WTC11 (cell line): ENCODE measurements at regions of chr1 and their contacts with region 1.

Region 1: GRCh38 chr1:201709564-201710295 is 119.2 kb upstream of the IPO9 start:
- DNase-seq: peak; percentile 87
- ATAC-seq: peak; percentile 98
- H3K4me3 Mint-ChIP-seq: no peak overlapping the region
- H3K27ac Mint-ChIP-seq: no peak overlapping the region
- H3K4me1 Mint-ChIP-seq: peaks cover 8% of the 10 kb centered on the region
- H3K27me3 Mint-ChIP-seq: no peaks in the 10 kb centered on the region
- CTCF ChIP-seq: peak; percentile 88

Region 2: DNA sequence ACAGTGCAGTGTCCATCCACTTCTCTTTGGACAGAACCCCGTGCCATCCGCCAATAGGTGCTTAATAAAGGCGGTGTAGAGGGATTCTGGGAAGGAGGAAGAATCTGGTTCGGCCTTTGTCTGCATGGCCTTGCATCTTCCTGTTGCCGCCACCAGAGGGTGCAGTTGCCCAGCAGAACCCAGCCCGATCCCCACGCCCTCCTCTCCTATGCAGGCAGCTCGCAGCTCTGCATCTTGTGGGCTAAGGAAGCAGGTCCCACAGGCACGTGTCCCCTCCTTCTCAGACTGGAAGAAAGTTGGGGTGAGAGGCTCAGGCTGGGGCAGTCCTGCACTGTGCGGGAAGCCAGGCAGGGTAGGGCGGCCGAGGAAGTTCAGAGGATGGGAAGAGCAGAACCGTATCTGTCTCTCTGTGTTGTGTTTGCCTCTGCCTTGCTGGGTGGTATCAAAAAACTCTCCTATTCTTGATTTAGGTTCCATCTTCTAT is 150.0 kb before region 1 on chr1:
- CTCF ChIA-PET with region 1: interaction called, 155 read pairs
- POLR2A ChIA-PET with region 1: no interaction called
- DNase-seq: peak; percentile 86
- ATAC-seq: peak; percentile 96
- H3K4me3 Mint-ChIP-seq: no peak overlapping the region
- H3K27ac Mint-ChIP-seq: no peak overlapping the region
- H3K4me1 Mint-ChIP-seq: peaks cover 17% of the 10 kb centered on the region
- H3K27me3 Mint-ChIP-seq: peaks cover 9% of the 10 kb centered on the region
- CTCF ChIP-seq: peak; percentile 91

Region 3: GRCh38 chr1:201649761-201650622 is 59.7 kb before region 1 on chr1:
- CTCF ChIA-PET with region 1: interaction called, 23 read pairs
- POLR2A ChIA-PET with region 1: no interaction called
- DNase-seq: peak; percentile 92
- ATAC-seq: peak; percentile 46
- H3K4me3 Mint-ChIP-seq: peak overlapping the region; percentile 79
- H3K27ac Mint-ChIP-seq: peak overlapping the region; percentile 82; the same call in 1 of the 2 replicates
- H3K4me1 Mint-ChIP-seq: peaks cover 55% of the 10 kb centered on the region
- H3K27me3 Mint-ChIP-seq: peaks cover 17% of the 10 kb centered on the region
- CTCF ChIP-seq: no peak

Region 4: GRCh38 chr1:201676197-201676596 is 33.5 kb before region 1 on chr1:
- CTCF ChIA-PET with region 1: interaction called, 15 read pairs
- POLR2A ChIA-PET with region 1: no interaction called
- DNase-seq: peak; percentile 50
- ATAC-seq: peak; percentile 66
- H3K4me3 Mint-ChIP-seq: peak overlapping the region; percentile 14; the same call in 1 of the 2 replicates
- H3K27ac Mint-ChIP-seq: peak overlapping the region; percentile 84
- H3K4me1 Mint-ChIP-seq: peaks cover 66% of the 10 kb centered on the region
- H3K27me3 Mint-ChIP-seq: no peaks in the 10 kb centered on the region
- CTCF ChIP-seq: no peak

Region 5: DNA sequence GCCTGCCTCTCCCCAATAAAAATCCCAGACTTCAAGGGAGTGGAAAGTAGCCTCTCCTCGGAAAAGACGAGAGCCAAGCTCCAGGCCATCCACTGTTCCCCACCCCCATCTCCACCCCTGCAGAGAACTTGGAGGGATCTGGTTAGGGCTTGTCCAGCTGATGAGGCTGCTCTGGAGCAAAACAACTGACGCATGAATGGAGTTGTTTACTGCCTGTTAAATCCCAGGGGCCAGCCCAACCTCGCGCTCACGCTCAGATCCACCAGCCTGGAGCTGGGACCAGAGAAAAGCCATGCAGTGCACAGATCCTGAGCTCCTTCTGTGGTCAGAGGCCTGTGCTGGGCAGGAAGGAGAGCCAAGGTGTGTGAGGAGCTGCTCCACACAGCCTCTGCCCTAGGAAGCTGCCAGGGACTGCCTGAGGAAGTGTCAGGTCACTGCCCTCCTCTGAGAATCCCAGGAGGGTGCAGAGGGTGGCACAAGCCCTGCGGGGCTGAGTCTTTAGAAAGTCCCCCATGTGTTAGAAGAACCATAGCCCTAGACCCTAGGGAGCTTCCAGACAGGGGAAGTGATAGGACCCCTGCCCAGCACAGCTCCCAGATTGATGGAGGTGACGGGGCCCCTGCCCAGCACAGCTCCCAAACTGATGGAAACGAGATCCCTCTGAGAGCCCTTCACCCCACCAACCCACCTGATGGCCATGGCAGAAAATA is 10.2 kb after region 1 on chr1:
- CTCF ChIA-PET with region 1: interaction called, 45 read pairs
- POLR2A ChIA-PET with region 1: no interaction called
- DNase-seq: no peak
- ATAC-seq: no peak; the same call in 1 of the 2 replicates
- H3K4me3 Mint-ChIP-seq: no peak overlapping the region
- H3K27ac Mint-ChIP-seq: peak overlapping the region; percentile 90
- H3K4me1 Mint-ChIP-seq: peaks cover 36% of the 10 kb centered on the region
- H3K27me3 Mint-ChIP-seq: no peaks in the 10 kb centered on the region
- CTCF ChIP-seq: no peak

Region 6: GRCh38 chr1:201783572-201783971 is 73.8 kb after region 1 on chr1:
- CTCF ChIA-PET with region 1: interaction called, 378 read pairs
- POLR2A ChIA-PET with region 1: no interaction called
- DNase-seq: peak; percentile 21
- ATAC-seq: peak; percentile 39; the same call in 1 of the 2 replicates
- H3K4me3 Mint-ChIP-seq: no peak overlapping the region
- H3K27ac Mint-ChIP-seq: no peak overlapping the region
- H3K4me1 Mint-ChIP-seq: no peaks in the 10 kb centered on the region
- H3K27me3 Mint-ChIP-seq: no peaks in the 10 kb centered on the region
- CTCF ChIP-seq: no peak